Left cardiac atrium (tissue), 4 donors: ENCODE measurements at regions of chr3 and their contacts with region 1.

Region 1: DNA sequence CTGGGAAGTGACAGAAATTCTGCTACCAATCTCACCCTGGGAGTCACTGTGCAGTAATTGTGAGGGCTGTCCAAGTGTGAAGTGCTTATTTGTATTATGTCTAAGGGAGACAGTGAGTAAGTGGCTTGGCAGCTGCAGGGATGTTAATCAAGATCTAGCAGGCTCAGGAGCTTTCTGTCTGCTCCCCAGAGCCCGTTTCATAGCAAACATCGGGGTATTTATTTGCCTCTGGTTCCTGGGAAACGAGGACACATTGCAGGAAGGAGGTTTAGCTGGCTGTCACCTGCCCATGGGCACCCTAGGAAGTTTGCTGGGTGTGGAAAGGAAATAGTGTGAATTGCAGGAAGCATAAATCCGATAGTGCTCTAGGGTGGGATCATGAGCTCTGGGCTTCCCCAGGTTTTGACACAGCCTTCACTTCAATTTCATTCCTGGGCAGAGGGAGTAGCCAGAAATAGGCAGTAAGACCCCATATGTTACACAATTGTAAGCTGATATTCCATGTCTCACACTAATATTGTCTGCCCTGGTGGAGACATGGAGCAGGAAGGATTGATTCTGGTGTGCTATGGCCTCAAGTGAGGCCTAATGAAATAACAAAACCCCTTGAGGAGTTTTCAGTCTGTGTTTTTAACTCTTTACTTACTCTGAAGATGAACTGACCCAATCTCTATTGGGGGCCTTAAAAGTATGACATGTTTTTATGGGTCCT is 74.1 kb upstream of the MITF start:
- DNase-seq: peak; percentile 50
- ATAC-seq: peak; percentile 83 to 97

Region 2: DNA sequence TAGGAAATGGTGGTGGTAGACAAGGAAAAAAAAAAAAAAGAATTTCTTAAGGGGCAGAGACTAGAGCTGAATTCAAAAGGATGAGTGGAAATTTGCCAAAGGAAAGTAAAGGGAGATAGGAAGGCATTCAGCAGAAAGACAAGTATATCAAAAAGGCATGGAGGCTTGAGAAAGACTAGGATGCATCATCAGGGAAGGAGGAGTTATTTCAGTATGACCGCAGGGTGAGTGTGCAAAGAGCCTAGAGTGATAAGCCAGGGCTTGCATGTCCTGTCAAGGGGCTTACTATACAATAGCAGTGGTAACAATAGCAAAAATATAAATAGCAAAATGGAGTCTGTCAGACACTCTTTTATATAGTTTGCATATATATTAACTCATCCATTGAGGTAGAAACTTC is 391.3 kb before region 1 on chr3:
- intact Hi-C with region 1: no loop called
- DNase-seq: no peak
- ATAC-seq: peak in 1 of 2 donors; percentile 89

Region 3: DNA sequence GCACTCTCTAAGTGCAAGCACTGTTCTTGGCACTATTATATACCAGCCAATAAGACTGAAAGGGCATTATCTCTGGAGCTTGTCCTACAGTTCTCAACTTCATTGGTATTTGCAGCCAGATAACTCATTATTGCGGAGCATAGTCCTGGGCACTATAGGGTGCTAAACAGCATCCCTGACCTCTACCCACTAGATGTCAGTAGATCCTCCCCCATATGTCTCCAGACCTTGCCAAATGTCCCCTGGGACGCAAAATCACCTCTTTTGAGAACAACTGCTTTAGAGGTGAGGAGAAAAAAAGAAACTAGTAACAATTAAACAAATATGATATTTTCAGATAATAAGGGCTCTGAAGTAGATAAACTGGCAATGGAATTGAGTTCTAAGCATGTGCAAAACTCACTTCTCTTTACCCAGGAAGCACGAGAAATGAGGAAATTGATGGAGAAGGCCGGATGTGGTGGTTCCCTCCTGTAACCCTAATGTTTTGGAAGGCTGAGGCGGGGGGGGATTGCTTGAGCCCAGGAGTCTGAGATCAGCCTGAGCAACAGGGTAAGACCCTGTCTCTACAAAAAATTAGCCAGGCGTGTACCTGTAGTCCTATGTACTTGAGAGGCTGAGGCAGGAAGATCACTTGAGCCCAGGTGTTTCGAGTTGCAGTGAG is 340.7 kb before region 1 on chr3:
- intact Hi-C with region 1: loop called in 1 of 2 experiments (anchors 10 kb)
- DNase-seq: no peak
- ATAC-seq: peak in 1 of 2 donors; percentile 16

Region 4: DNA sequence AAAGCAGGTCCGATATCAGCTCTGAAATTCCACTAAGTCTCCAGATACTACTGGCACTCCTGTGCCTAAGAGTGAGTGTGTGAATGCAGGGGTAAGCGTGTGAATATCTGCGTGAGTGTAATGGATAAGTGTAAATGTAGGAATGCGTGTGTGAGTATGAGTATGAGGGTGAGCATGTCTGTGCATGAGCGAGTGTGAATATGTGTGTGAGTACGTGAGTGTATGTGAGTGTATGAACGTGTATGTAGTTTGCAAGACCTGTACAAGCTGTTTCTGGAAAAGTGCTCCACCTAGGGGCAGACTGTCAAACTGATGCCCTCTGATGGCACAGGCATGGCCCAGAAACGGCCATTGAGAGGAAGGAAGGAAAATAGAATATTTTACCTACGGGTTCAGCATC is 254.9 kb before region 1 on chr3:
- intact Hi-C with region 1: no loop called
- DNase-seq: peak; percentile 77
- ATAC-seq: peak; percentile 74 to 82

Region 5: DNA sequence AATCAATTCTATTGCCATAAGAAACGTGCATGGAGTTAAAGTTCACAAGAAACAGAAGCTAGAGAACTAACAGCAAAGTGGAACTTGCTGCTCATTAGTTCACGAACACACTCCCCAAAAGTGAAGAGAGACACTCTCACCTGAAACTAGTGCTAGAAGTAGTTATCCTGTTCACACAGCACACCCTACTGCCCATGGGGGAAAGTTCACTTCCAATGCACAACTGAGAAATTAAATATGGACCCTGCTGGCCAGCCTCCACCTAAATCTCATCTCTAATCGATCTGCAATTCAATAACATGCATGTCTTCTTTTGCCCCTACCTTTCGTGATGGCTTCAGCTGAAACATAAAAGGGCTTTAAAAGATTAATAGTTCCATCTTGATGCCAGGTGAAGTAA is 239.9 kb before region 1 on chr3:
- intact Hi-C with region 1: loop called in 1 of 2 experiments (anchors 5 kb)
- DNase-seq: no peak
- ATAC-seq: peak; percentile 53 to 69

Region 6: GRCh38 chr3:69439643-69440270 is 225.4 kb before region 1 on chr3:
- intact Hi-C with region 1: loop called in 1 of 2 experiments (anchors 5 kb)
- DNase-seq: no peak
- ATAC-seq: peak; percentile 30 to 55

Region 7: GRCh38 chr3:69724722-69725435 is 59.7 kb after region 1 on chr3:
- intact Hi-C with region 1: no loop called
- DNase-seq: no peak
- ATAC-seq: peak; percentile 76 to 78